ENCODE measurements at regions of chr1 and their contacts with region 1.

Region 1: GRCh38 chr1:151156515-151156819 is at the start of gene TNFAIP8L2:
- DNase-seq: peak; percentile 76 to 84
- ATAC-seq: peak; percentile 55
- H3K4me3 ChIP-seq: no peak within 1 kb of the TSS
- H3K27ac ChIP-seq: no peak within 1 kb of the TSS
- H3K4me1 ChIP-seq: no peaks in the 10 kb centered on the region
- H3K27me3 ChIP-seq: no peaks in the 10 kb centered on the region
- total RNA-seq, gene TNFAIP8L2: 4.1 TPM

Region 2: GRCh38 chr1:151008190-151008860 is 148.1 kb before region 1 on chr1 and contains the start of gene PRUNE1:
- intact Hi-C with region 1: no loop called
- DNase-seq: peak; percentile 99 to 100
- ATAC-seq: peak; percentile 97
- H3K4me3 ChIP-seq: peak within 1 kb of the TSS; percentile 27 to 42
- H3K27ac ChIP-seq: peak within 1 kb of the TSS in 1 of 2 donors; percentile 90
- H3K4me1 ChIP-seq: peaks cover 0 to 3% of the 10 kb centered on the region in 2 donors
- H3K27me3 ChIP-seq: no peaks in the 10 kb centered on the region
- total RNA-seq, gene PRUNE1: 14.8 TPM

Region 3: GRCh38 chr1:151024540-151025146 is 131.8 kb before region 1 on chr1:
- intact Hi-C with region 1: loop called in 1 of 2 experiments (anchors 2 kb)
- DNase-seq: peak; percentile 90 to 92
- ATAC-seq: peak; percentile 91
- H3K4me3 ChIP-seq: no peak overlapping the region
- H3K27ac ChIP-seq: peak overlapping the region in 1 of 2 donors; percentile 48
- H3K4me1 ChIP-seq: no peaks in the 10 kb centered on the region
- H3K27me3 ChIP-seq: no peaks in the 10 kb centered on the region

Region 4: GRCh38 chr1:151098126-151098525 is 58.3 kb before region 1 on chr1:
- intact Hi-C with region 1: loop called (anchors 2 to 5 kb)
- DNase-seq: no peak
- ATAC-seq: no peak
- H3K4me3 ChIP-seq: no peak overlapping the region
- H3K27ac ChIP-seq: no peak overlapping the region
- H3K4me1 ChIP-seq: no peaks in the 10 kb centered on the region
- H3K27me3 ChIP-seq: no peaks in the 10 kb centered on the region

Region 5: DNA sequence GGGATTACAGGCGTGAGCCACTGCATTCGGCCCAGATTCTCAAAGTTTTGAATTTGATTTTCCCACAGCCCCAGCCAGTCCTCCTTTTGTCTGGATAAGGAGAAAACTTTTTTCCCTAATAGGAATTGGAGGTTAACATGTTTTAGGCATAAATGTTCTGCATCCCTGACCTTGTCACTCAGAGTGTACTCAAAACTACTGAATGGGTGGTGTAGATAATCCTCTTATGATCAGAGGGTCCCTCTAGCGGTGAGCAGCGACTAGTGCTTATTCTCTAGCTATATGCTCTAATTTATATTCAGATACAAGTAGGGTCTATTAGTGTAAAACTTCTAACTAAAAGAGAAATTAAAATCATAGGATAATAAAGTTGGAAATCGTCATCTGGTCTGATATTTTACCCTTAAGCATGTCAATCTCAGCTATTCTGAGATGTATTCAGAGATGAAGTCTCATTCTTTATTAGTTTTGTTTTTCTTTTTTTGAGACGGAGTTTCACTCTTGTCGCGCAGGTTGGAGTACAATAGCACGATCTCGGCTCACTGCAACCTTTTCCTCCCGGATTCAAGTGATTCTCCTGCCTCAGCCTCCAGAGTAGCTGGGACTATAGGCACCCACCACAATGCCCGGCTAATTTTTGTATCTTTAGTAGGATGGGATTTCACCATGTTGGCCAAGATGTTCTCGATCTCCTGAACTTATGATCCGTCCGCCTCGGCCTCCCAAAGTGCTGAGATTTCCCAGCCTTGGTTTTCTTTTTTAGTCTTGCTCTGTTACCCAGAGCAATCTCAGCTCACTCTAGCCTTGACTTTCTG is 95.4 kb after region 1 on chr1:
- intact Hi-C with region 1: no loop called
- DNase-seq: peak; percentile 75 to 79
- ATAC-seq: peak; percentile 69
- H3K4me3 ChIP-seq: no peak overlapping the region
- H3K27ac ChIP-seq: no peak overlapping the region
- H3K4me1 ChIP-seq: peaks cover 0 to 3% of the 10 kb centered on the region in 2 donors
- H3K27me3 ChIP-seq: no peaks in the 10 kb centered on the region

Measured in aorta (tissue), 5 donors.